ENCODE measurements at regions of chr11 and their contacts with region 1.

Region 1: DNA sequence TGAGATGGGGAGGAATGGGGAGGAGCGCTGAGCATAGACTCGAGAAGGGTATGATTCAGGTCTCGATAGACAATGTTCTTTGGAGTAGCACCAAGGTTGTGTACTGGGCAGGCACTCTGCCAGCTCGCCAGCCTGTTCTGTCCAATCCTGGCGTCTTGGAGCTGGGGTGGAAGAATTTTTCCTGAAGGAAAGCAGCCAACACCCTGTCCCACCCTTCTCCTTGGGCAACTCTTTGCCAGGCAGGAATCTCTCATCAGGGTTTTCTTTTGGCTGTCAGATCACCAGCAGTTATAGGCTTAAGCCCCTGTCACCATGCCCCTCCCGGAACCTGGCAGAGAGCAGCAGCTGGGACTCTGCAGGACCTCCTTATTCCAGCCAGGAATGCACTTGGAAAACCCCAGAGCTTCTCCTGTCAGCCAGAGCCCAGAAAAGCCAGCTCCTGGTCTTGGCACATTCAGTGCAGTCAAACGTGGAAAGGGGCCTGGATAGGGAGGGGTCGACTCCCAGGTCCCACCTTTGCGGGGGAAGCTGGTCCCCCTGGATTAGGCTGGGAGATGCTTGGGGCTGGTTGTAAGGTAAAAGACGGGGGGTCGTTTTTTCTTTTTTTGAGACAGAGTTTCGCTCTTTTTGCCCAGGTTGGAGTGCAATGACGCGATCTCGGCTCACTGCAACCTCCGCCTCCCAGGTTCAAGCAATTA is 14.4 kb upstream of the SPTBN2 start:
- DNase-seq: no peak
- H3K4me3 ChIP-seq: peak overlapping the region in 1 of 4 experiments; percentile 91; a peak in 1 of 8 replicates
- H3K27ac ChIP-seq: no peak overlapping the region
- H3K4me1 ChIP-seq: peaks cover 0 to 2% (median 1%) of the 10 kb centered on the region in 4 experiments; a peak in 2 of 7 replicates
- H3K27me3 ChIP-seq: no peaks in the 10 kb centered on the region
- CTCF ChIP-seq: no peak
- EP300 ChIP-seq: no peak
- POLR2A ChIP-seq: no peak
- RAD21 ChIP-seq: no peak

Region 2: DNA sequence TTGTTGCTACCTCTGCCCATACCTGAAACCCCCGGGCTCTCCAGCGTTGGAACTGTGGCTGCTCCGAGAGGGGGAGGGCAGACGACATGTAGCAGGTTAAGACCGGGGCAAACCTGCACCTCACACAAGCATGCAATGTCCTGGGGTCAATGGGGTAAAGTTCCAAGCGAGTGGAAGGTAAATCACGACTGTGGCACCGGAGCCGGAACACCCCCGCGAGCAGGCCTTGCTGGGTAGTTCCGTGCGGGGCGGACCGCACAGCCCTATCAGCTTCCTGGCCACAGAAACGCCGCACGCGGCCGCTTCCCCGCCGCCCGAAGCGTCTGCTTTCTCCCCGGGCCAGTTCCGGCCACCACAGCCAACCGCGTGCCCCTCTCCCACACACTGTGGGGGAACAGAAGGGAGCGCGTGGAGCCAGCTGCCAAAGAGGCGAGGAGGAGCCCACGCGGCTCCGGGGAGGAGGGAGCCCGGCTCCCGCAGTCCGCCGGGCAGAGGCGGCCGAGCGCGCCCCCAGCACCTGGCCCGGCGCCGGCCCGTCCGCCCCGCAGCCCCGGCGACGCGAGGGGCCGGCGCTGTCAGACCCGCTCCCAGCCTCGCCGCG is 16.0 kb before region 1 on chr11:
- CTCF ChIA-PET with region 1: interaction called, 10 read pairs
- POLR2A ChIA-PET with region 1: interaction called, 5 read pairs
- DNase-seq: peak in 1 of 2 experiments; percentile 71
- H3K4me3 ChIP-seq: peak overlapping the region; percentile 49 to 76 (median 74)
- H3K27ac ChIP-seq: 0 out of 2 replicates have a peak overlapping the region, but pooled peaks have one; percentile 12
- H3K4me1 ChIP-seq: peaks cover 10 to 24% (median 15%) of the 10 kb centered on the region in 4 experiments; a peak in 6 of 7 replicates
- H3K27me3 ChIP-seq: peaks cover 0 to 27% (median 15%) of the 10 kb centered on the region in 4 experiments; a peak in 6 of 7 replicates
- CTCF ChIP-seq: no peak
- EP300 ChIP-seq: no peak
- POLR2A ChIP-seq: peak in 1 of 2 experiments; percentile 30; a peak in 1 of 3 replicates
- RAD21 ChIP-seq: no peak